Mammary epithelial cell (primary cell): ENCODE measurements at regions of chr7 and their contacts with region 1.

Region 1: DNA sequence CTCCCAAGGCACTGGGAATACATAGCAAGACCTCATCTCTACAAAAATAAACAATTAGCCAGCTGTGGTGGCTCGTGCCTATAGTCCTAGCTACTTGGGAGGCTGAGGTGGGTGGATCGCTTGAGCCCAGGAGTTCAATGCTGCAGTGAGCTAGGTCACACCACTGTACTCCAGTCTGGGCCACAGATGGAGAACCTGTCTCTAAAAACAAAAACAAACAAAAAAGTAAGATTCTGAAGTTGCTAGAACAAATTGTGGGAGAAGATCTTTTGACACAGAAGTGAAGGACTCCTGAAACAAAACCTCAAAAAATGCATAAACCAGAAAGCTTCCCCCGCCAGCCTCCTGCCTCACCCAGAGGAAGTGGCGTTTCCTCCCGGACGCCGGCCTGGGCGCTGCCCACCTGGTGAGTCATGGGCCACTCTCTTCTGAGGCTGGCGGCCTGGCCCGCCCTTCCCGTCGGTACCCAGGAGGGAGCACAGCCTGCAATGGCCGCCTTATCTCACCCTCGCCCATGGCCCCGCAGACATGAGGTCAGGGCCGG is 25.4 kb upstream of the ELN start:
- DNase-seq: peak; percentile 57
- H3K4me3 ChIP-seq: peak overlapping the region in 1 of 3 experiments; percentile 9
- H3K27ac ChIP-seq: peak overlapping the region; percentile 33
- H3K4me1 ChIP-seq: peaks cover 12% of the 10 kb centered on the region
- H3K27me3 ChIP-seq: no peaks in the 10 kb centered on the region
- CTCF ChIP-seq: no peak

Region 2: GRCh38 chr7:73966943-73967831 is 35.4 kb before region 1 on chr7:
- CTCF ChIA-PET with region 1: no interaction called
- dilution Hi-C with region 1: loop called (anchors 5 kb)
- in situ Hi-C with region 1: no loop called
- intact Hi-C with region 1: no loop called
- DNase-seq: no peak
- H3K4me3 ChIP-seq: no peak overlapping the region
- H3K27ac ChIP-seq: no peak overlapping the region
- H3K4me1 ChIP-seq: no peaks in the 10 kb centered on the region
- H3K27me3 ChIP-seq: no peaks in the 10 kb centered on the region
- CTCF ChIP-seq: no peak

Region 3: GRCh38 chr7:74039346-74039745 is 36.8 kb after region 1 on chr7:
- CTCF ChIA-PET with region 1: no interaction called
- dilution Hi-C with region 1: loop called (anchors 5 kb)
- in situ Hi-C with region 1: no loop called
- intact Hi-C with region 1: no loop called
- DNase-seq: peak; percentile 10
- H3K4me3 ChIP-seq: no peak overlapping the region
- H3K27ac ChIP-seq: no peak overlapping the region
- H3K4me1 ChIP-seq: peaks cover 13% of the 10 kb centered on the region
- H3K27me3 ChIP-seq: no peaks in the 10 kb centered on the region
- CTCF ChIP-seq: no peak

Region 4: GRCh38 chr7:74355091-74355490 is 352.5 kb after region 1 on chr7:
- CTCF ChIA-PET with region 1: no interaction called
- dilution Hi-C with region 1: no loop called
- in situ Hi-C with region 1: no loop called
- intact Hi-C with region 1: no loop called
- DNase-seq: peak; percentile 81
- H3K4me3 ChIP-seq: no peak overlapping the region
- H3K27ac ChIP-seq: no peak overlapping the region
- H3K4me1 ChIP-seq: peaks cover 4% of the 10 kb centered on the region
- H3K27me3 ChIP-seq: no peaks in the 10 kb centered on the region
- CTCF ChIP-seq: no peak